Stomach (tissue), 19 donors: ENCODE measurements at regions of chr7 and their contacts with region 1.

Region 1: GRCh38 chr7:97027427-97028234 is 3.0 kb upstream of the DLX5 start:
- DNase-seq: peak; percentile 77 to 93
- H3K4me3 ChIP-seq: peak overlapping the region; percentile 24 to 55 (median 39)
- H3K27ac ChIP-seq: no peak overlapping the region
- H3K4me1 ChIP-seq: peaks cover 21 to 50% (median 42%) of the 10 kb centered on the region in 4 donors
- H3K27me3 ChIP-seq: peaks cover 18 to 97% (median 50%) of the 10 kb centered on the region in 3 donors
- CTCF ChIP-seq: peak in 5 of 7 experiments; percentile 75 to 84 (median 79)
- EP300 ChIP-seq: no peak
- POLR2A ChIP-seq: no peak

Region 2: DNA sequence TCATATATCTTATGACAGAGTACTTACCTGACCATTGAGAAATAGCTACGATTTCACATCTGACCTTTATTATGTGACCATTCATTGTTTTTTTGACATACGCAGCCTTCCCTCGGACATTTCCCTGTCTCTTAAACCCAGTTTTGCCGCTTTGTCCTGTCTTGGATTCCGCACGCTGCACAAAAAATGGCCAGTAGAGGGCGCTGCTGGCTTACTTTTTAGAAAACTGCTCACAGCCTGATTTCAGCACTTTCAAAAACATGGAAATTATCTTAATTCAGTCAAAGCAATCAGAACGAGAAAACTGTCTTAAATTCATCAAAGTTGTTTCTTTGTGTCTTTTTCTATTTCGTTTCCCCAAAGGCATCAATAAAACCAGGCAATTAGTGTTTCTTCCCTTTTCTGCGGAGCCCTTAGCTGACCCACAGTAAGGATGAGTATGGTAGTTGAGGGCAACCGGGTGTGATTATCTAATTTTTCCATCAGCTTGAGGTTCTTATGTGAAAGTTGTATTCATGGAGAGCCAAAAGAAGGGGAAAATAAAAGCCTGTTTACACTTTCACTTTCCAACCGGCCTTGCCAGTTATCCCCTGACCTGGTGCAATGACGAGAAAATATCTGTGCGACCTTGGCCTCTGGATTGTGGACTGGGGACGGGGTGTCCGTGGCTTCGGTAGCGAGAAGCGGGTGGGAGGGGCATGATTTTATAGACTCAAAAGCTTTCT is 1110.9 kb before region 1 on chr7:
- intact Hi-C with region 1: loop called (anchors 10 kb)
- DNase-seq: peak; percentile 89
- H3K4me3 ChIP-seq: peak overlapping the region in 3 of 4 donors; percentile 21 to 32 (median 28)
- H3K27ac ChIP-seq: no peak overlapping the region
- H3K4me1 ChIP-seq: peaks cover 0 to 12% (median 5%) of the 10 kb centered on the region in 4 donors
- H3K27me3 ChIP-seq: no peaks in the 10 kb centered on the region
- CTCF ChIP-seq: peak in 6 of 7 experiments; percentile 30 to 97 (median 84)
- EP300 ChIP-seq: no peak
- POLR2A ChIP-seq: no peak

Region 3: GRCh38 chr7:96075510-96076349 is 951.9 kb before region 1 on chr7:
- intact Hi-C with region 1: loop called (anchors 5 kb)
- DNase-seq: peak; percentile 63 to 84
- H3K4me3 ChIP-seq: peak overlapping the region; percentile 50 to 63 (median 56)
- H3K27ac ChIP-seq: peak overlapping the region in 1 of 5 donors; percentile 39
- H3K4me1 ChIP-seq: peaks cover 6 to 12% (median 11%) of the 10 kb centered on the region in 4 donors
- H3K27me3 ChIP-seq: peaks cover 0 to 15% (median 0%) of the 10 kb centered on the region in 3 donors
- CTCF ChIP-seq: peak in 5 of 7 experiments; percentile 66 to 78 (median 68)
- EP300 ChIP-seq: no peak
- POLR2A ChIP-seq: no peak

Region 4: DNA sequence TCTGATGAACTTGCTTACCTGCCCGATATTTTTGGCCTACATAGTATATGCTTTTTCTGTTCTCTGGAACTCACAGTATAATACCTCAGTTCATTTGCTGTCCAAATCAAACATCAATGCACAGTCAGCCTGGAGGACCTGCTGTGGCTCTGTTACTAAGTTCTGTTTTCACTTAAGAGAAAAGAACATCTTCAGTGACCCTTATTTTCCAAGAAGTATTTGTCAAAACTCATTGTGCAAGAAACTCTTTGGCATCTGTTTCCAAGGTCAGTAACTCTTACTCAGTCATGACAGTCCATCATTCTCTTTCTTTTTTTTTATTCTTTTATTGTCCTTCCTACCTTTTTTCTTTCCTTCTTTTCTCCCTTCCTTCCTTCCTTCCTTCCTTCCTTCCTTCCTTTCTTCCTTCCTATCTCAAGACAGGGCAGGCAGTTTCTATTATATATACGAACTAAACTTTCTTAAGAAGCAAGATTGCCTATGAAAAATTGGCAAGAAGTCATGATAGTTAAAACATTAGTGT is 280.2 kb before region 1 on chr7:
- intact Hi-C with region 1: no loop called
- DNase-seq: no peak
- H3K4me3 ChIP-seq: no peak overlapping the region
- H3K27ac ChIP-seq: no peak overlapping the region
- H3K4me1 ChIP-seq: no peaks in the 10 kb centered on the region
- H3K27me3 ChIP-seq: no peaks in the 10 kb centered on the region
- CTCF ChIP-seq: no peak
- EP300 ChIP-seq: no peak
- POLR2A ChIP-seq: no peak